GM12878 (cell line): ENCODE measurements at regions of chr7 and their contacts with region 1.

Region 1: DNA sequence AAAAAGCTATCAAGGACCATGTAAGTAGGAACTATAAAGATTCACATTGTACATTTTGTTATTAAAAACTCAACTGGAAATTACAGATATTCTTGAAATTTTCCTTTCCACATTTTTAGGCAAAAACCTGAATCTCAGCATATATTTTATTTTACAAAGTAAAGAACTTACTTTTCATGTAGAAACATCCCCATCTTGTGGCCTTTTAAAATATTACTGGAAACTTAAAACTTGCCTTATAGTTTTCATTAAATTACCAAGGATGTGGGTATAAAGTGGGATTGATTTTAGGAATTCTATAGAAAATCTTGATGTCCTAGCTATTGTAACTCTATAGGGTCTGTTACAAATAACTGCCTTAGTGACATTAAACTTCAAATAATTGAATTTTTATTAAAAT is 10.6 kb downstream of the DBF4 start:
- DNase-seq: no peak
- ATAC-seq: no peak
- H3K4me3 ChIP-seq: no peak overlapping the region
- H3K27ac ChIP-seq: no peak overlapping the region
- H3K4me1 ChIP-seq: no peaks in the 10 kb centered on the region
- H3K27me3 ChIP-seq: no peaks in the 10 kb centered on the region
- CTCF ChIP-seq: peak in 2 of 3 experiments; percentile 8 to 32; a peak in 2 of 6 replicates
- EP300 ChIP-seq: no peak
- POLR2A ChIP-seq: no peak
- RAD21 ChIP-seq: peak; percentile 56

Region 2: GRCh38 chr7:87312215-87312865 is 574.5 kb before region 1 on chr7:
- CTCF ChIA-PET with region 1: interaction called, 4 read pairs
- POLR2A ChIA-PET with region 1: no interaction called
- RAD21 ChIA-PET with region 1: interaction called, 4 read pairs
- SMC1A ChIA-PET with region 1: no interaction called
- in situ Hi-C with region 1: loop called (anchors 10 kb)
- intact Hi-C with region 1: loop called (anchors 5 kb)
- DNase-seq: peak; percentile 15
- ATAC-seq: peak; percentile 81
- H3K4me3 ChIP-seq: no peak overlapping the region
- H3K27ac ChIP-seq: no peak overlapping the region
- H3K4me1 ChIP-seq: peaks cover 8% of the 10 kb centered on the region
- H3K27me3 ChIP-seq: no peaks in the 10 kb centered on the region
- CTCF ChIP-seq: peak; percentile 97 to 98 (median 98); a peak in 5 of 6 replicates
- EP300 ChIP-seq: no peak
- POLR2A ChIP-seq: no peak
- RAD21 ChIP-seq: peak; percentile 100

Region 3: GRCh38 chr7:87797798-87798403 is 89.0 kb before region 1 on chr7:
- CTCF ChIA-PET with region 1: interaction called, 81 read pairs
- POLR2A ChIA-PET with region 1: interaction called, 3 read pairs
- RAD21 ChIA-PET with region 1: interaction called, 29 read pairs
- SMC1A ChIA-PET with region 1: interaction called, 55 read pairs
- in situ Hi-C with region 1: loop called (anchors 5 kb)
- intact Hi-C with region 1: loop called (anchors 1 kb)
- DNase-seq: peak; percentile 45
- ATAC-seq: peak; percentile 96
- H3K4me3 ChIP-seq: no peak overlapping the region
- H3K27ac ChIP-seq: no peak overlapping the region
- H3K4me1 ChIP-seq: no peaks in the 10 kb centered on the region
- H3K27me3 ChIP-seq: no peaks in the 10 kb centered on the region
- CTCF ChIP-seq: peak; percentile 56 to 81 (median 59); a peak in 4 of 6 replicates
- EP300 ChIP-seq: no peak
- POLR2A ChIP-seq: no peak
- RAD21 ChIP-seq: peak; percentile 89

Region 4: GRCh38 chr7:87876040-87876868 is 10.6 kb before region 1 on chr7 and contains the starts of genes DBF4 and SLC25A40:
- CTCF ChIA-PET with region 1: interaction called, 10 read pairs
- POLR2A ChIA-PET with region 1: no interaction called
- RAD21 ChIA-PET with region 1: interaction called, 13 read pairs
- SMC1A ChIA-PET with region 1: interaction called, 32 read pairs
- in situ Hi-C with region 1: no loop called
- intact Hi-C with region 1: no loop called
- DNase-seq: peak; percentile 86
- ATAC-seq: peak; percentile 86
- H3K4me3 ChIP-seq: peak within 1 kb of the TSS; percentile 88
- H3K27ac ChIP-seq: peak within 1 kb of the TSS; percentile 92
- H3K4me1 ChIP-seq: no peaks in the 10 kb centered on the region
- H3K27me3 ChIP-seq: no peaks in the 10 kb centered on the region
- CTCF ChIP-seq: no peak
- EP300 ChIP-seq: peak in 1 of 2 experiments; percentile 34; a peak in 1 of 4 replicates
- POLR2A ChIP-seq: peak; percentile 91
- RAD21 ChIP-seq: no peak
- polyA plus RNA-seq, gene DBF4: 46.1 to 47.0 TPM
- polyA plus RNA-seq, gene SLC25A40: 15.8 to 17.4 TPM

Region 5: DNA sequence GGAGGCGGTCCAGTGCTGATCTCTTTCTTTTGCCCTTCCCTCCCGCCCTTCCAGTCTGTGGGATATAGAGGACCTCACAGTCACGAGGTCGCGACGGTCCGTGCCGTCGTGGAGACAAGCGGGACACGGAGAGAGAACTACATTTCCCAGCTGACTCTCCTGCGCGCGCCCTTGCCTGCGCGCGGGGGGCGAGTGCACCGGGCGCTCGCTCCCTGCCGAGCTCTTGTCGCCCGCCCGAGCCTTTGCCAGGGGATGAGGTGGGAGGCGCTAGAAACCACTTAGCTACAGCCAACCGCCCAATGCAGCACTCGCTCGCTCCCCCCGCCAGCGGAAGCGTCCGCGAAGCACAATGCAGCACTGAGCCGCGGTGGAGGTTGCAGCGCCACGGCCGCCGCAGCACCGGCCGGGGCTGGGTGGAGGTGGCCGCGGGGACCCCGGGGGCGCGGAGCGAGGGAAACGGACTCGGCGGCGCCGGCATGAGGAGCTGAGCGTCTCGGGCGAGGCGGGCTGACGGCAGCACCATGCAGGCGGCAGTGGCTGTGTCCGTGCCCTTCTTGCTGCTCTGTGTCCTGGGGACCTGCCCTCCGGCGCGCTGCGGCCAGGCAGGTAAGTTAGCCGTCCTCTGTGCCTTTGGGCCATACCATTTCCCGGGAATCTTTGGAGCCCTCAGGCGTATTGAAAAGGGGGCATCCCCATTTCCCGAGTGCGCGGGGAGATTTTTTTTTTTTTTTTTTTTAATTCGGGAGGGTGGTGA is 47.2 kb after region 1 on chr7 and contains the start of gene ADAM22:
- CTCF ChIA-PET with region 1: interaction called, 9 read pairs
- POLR2A ChIA-PET with region 1: interaction called, 4 read pairs
- RAD21 ChIA-PET with region 1: interaction called, 10 read pairs
- SMC1A ChIA-PET with region 1: interaction called, 5 read pairs
- in situ Hi-C with region 1: no loop called
- intact Hi-C with region 1: no loop called
- DNase-seq: peak; percentile 83
- ATAC-seq: peak; percentile 94
- H3K4me3 ChIP-seq: peak within 1 kb of the TSS; percentile 71
- H3K27ac ChIP-seq: peak within 1 kb of the TSS; percentile 60
- H3K4me1 ChIP-seq: no peaks in the 10 kb centered on the region; the same call in 1 of the 2 replicates
- H3K27me3 ChIP-seq: no peaks in the 10 kb centered on the region
- CTCF ChIP-seq: peak; percentile 14 to 46 (median 16); a peak in 3 of 6 replicates
- EP300 ChIP-seq: peak; percentile 16 to 57; a peak in 1 of 4 replicates
- POLR2A ChIP-seq: peak; percentile 97
- RAD21 ChIP-seq: peak; percentile 19; the same call in 1 of the 2 replicates
- polyA plus RNA-seq, gene ADAM22: 1.4 TPM

Region 6: DNA sequence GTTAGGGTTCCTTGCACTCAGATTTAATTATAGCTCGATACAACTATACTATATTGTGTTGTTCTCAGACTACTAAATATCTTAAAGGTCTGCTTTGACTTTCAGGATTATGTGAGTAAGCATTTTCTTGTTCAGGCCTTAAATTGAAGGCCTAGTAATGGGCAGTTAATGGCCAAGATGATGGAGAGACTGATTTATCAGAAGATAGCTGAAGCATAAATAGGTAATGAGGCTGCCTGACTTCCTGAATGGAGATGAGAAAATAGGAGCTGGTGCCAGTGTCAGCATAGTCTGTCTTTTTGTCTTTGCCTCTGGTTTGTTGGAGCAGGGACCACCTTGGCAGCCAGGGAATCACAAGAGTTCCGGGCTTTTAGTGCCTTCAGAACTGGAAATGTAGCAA is 79.4 kb after region 1 on chr7:
- CTCF ChIA-PET with region 1: no interaction called
- POLR2A ChIA-PET with region 1: no interaction called
- RAD21 ChIA-PET with region 1: no interaction called
- SMC1A ChIA-PET with region 1: no interaction called
- in situ Hi-C with region 1: no loop called
- intact Hi-C with region 1: no loop called
- DNase-seq: no peak
- ATAC-seq: no peak
- H3K4me3 ChIP-seq: no peak overlapping the region
- H3K27ac ChIP-seq: no peak overlapping the region
- H3K4me1 ChIP-seq: no peaks in the 10 kb centered on the region
- H3K27me3 ChIP-seq: no peaks in the 10 kb centered on the region
- CTCF ChIP-seq: no peak
- EP300 ChIP-seq: no peak
- POLR2A ChIP-seq: no peak
- RAD21 ChIP-seq: no peak

Region 7: GRCh38 chr7:88083883-88084282 is 197.0 kb after region 1 on chr7:
- CTCF ChIA-PET with region 1: no interaction called
- POLR2A ChIA-PET with region 1: no interaction called
- RAD21 ChIA-PET with region 1: no interaction called
- SMC1A ChIA-PET with region 1: no interaction called
- in situ Hi-C with region 1: no loop called
- intact Hi-C with region 1: no loop called
- DNase-seq: no peak
- ATAC-seq: no peak
- H3K4me3 ChIP-seq: no peak overlapping the region
- H3K27ac ChIP-seq: no peak overlapping the region
- H3K4me1 ChIP-seq: no peaks in the 10 kb centered on the region
- H3K27me3 ChIP-seq: no peaks in the 10 kb centered on the region
- CTCF ChIP-seq: no peak
- EP300 ChIP-seq: no peak
- POLR2A ChIP-seq: no peak
- RAD21 ChIP-seq: no peak